CD4-positive, alpha-beta T cell (primary cell): ENCODE measurements at regions of chr11 and their contacts with region 1.

Region 1: DNA sequence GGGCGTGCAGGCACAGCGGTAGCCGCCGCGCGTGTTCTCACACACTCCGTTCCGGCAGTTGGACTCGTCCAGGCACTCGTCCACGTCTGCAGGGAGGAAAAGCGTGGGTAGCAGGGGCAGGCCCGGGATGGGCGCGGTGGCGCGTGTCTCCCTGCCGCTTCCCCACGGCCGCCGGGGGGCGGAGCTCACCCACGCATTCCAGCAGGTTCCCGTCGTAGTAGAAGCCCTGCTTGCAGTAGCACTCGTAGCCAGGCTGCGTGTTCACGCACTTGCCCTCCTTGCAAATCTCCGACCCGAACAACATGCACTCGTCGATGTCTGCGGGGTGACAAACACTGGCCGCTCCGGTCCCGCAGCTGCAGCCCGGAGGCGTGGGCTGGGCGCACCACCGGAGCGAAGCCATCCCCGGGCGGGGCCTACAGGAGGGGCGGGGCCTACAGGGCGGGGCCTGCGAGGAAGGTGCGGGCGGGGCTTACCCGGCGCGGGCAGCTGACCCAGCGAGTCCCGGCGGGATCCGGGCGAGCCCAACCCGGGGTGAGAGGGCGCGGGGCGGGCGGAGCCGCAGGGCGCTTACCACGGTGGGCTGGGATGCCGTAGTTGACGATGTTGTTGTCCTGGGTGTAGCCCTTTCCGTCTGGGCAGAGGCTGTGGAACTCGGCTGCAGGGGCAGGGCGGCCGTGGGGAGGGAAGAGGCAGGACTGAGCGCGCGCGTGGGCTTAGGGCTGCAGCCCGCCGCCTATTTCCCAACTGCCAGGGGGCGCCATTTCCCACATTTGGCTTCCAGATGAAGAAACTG is 15.6 kb downstream of the SCYL1 start:
- DNase-seq: peak; percentile 81 to 94 (median 85)
- ATAC-seq: peak; percentile 82
- H3K4me3 ChIP-seq: peak overlapping the region; percentile 80
- H3K4me3 Mint-ChIP-seq: peak overlapping the region; percentile 90
- H3K27ac ChIP-seq: peak overlapping the region; percentile 14 to 64
- H3K27ac Mint-ChIP-seq: peak overlapping the region; percentile 65
- H3K4me1 ChIP-seq: peaks cover 23% of the 10 kb centered on the region
- H3K4me1 Mint-ChIP-seq: peaks cover 25% of the 10 kb centered on the region
- H3K27me3 ChIP-seq: no peaks in the 10 kb centered on the region
- H3K27me3 Mint-ChIP-seq: no peaks in the 10 kb centered on the region
- CTCF ChIP-seq: peak; percentile 79

Region 2: GRCh38 chr11:64916040-64916774 is 624.3 kb before region 1 on chr11:
- CTCF ChIA-PET with region 1: no interaction called
- POLR2A ChIA-PET with region 1: no interaction called
- intact Hi-C with region 1: no loop called
- DNase-seq: peak in 12 of 14 experiments; percentile 12 to 82 (median 36)
- ATAC-seq: no peak
- H3K4me3 ChIP-seq: peak overlapping the region; percentile 89
- H3K4me3 Mint-ChIP-seq: peak overlapping the region; percentile 93
- H3K27ac ChIP-seq: peak overlapping the region; percentile 66 to 78
- H3K27ac Mint-ChIP-seq: peak overlapping the region; percentile 81
- H3K4me1 ChIP-seq: peaks cover 33% of the 10 kb centered on the region
- H3K4me1 Mint-ChIP-seq: peaks cover 26% of the 10 kb centered on the region
- H3K27me3 ChIP-seq: no peaks in the 10 kb centered on the region
- H3K27me3 Mint-ChIP-seq: no peaks in the 10 kb centered on the region
- CTCF ChIP-seq: no peak

Region 3: DNA sequence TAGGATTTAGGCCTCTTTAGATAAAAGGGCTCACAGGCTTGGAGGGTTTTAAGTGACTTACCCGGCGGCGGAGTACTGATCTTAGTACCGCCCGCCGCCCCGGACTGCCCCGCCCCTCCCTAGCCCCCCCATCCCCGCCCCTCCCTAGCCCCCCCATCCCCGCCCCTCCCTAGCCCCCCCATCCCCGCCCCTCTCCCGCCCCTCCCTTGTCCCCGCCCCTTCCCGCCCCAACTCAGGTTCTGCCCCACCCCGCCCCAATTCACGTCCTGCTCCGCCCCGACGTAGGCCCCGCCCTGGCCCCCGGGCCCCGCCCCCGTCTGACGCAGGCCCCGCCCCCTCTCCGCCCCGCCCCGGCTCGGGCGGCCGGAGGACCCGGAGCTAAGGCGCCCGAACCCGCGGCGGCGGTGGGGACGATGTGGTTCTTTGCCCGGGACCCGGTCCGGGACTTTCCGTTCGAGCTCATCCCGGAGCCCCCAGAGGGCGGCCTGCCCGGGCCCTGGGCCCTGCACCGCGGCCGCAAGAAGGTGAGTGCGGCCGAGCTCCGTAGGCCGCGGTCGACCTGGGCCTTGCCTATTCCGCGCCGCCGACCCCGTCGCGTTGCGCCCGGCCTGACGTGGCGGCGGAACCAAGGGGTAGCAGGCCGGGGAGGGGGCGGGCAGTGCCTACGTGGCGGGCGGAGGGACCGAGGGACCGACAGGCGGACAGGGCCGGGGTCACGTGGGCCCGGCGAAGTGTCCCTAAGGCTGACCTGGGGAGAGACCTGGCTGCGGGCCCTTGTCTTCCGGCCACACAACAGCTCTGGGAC is 15.6 kb before region 1 on chr11 and contains the start of gene SCYL1:
- CTCF ChIA-PET with region 1: interaction called, 12 read pairs
- POLR2A ChIA-PET with region 1: interaction called, 27 read pairs
- intact Hi-C with region 1: loop called in 1 of 2 experiments (anchors 1 kb)
- DNase-seq: peak; percentile 72 to 91 (median 81)
- ATAC-seq: peak; percentile 79
- H3K4me3 ChIP-seq: peak within 1 kb of the TSS; percentile 75
- H3K4me3 Mint-ChIP-seq: peak within 1 kb of the TSS; percentile 88
- H3K27ac ChIP-seq: peak within 1 kb of the TSS; percentile 60 to 84
- H3K27ac Mint-ChIP-seq: peak within 1 kb of the TSS; percentile 91
- H3K4me1 ChIP-seq: peaks cover 65% of the 10 kb centered on the region
- H3K4me1 Mint-ChIP-seq: peaks cover 58% of the 10 kb centered on the region
- H3K27me3 ChIP-seq: no peaks in the 10 kb centered on the region
- H3K27me3 Mint-ChIP-seq: no peaks in the 10 kb centered on the region
- CTCF ChIP-seq: no peak
- total RNA-seq, gene SCYL1: 57.4 to 60.7 TPM

Region 4: DNA sequence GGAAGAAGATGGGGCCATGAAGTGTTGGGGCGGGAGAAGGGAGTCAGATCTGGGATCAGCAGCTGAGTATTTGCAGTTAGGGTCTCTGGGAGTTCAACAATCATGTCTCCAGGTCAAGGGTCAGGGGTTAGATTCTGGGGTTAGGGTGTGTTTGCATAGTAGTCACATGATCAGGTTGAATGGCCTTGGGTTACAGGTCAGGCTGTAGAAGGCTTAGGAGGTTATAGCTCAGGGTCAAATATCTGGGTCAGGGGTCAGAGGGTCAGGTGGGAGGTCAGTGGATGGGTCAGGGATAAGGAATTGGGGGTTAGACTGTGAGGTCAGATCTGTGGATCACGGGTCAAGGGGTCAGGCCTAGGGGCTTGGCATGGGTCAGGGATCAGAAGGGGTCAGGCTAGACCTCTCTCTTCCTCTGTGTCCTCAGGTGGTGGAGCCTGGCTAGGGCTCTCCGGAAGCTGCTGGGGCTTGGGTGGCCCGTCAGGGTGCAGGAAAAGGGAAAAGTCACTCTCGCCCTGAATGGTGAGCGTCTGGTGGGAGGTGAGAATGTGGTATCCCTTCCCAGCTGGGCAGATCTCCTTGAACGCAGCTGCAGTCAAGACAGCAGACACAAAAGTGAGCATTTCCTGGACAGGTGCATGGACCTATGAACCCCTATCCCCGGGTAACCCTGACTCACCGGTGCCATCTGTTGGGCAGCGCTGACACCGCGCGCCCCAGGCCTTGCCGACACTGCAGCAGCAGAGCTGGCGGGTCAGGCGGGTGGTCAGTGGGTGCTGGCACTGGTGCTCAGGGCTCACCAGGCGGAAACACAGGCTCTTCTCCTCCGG is 11.3 kb after region 1 on chr11:
- CTCF ChIA-PET with region 1: interaction called, 35 read pairs
- POLR2A ChIA-PET with region 1: interaction called, 41 read pairs
- intact Hi-C with region 1: loop called (anchors 1 kb)
- DNase-seq: peak; percentile 49 to 83 (median 64)
- ATAC-seq: peak; percentile 37
- H3K4me3 ChIP-seq: no peak overlapping the region
- H3K4me3 Mint-ChIP-seq: peak overlapping the region; percentile 71
- H3K27ac ChIP-seq: no peak overlapping the region
- H3K27ac Mint-ChIP-seq: peak overlapping the region; percentile 82
- H3K4me1 ChIP-seq: peaks cover 88% of the 10 kb centered on the region
- H3K4me1 Mint-ChIP-seq: peaks cover 83% of the 10 kb centered on the region
- H3K27me3 ChIP-seq: no peaks in the 10 kb centered on the region
- H3K27me3 Mint-ChIP-seq: no peaks in the 10 kb centered on the region
- CTCF ChIP-seq: peak; percentile 78

Region 5: DNA sequence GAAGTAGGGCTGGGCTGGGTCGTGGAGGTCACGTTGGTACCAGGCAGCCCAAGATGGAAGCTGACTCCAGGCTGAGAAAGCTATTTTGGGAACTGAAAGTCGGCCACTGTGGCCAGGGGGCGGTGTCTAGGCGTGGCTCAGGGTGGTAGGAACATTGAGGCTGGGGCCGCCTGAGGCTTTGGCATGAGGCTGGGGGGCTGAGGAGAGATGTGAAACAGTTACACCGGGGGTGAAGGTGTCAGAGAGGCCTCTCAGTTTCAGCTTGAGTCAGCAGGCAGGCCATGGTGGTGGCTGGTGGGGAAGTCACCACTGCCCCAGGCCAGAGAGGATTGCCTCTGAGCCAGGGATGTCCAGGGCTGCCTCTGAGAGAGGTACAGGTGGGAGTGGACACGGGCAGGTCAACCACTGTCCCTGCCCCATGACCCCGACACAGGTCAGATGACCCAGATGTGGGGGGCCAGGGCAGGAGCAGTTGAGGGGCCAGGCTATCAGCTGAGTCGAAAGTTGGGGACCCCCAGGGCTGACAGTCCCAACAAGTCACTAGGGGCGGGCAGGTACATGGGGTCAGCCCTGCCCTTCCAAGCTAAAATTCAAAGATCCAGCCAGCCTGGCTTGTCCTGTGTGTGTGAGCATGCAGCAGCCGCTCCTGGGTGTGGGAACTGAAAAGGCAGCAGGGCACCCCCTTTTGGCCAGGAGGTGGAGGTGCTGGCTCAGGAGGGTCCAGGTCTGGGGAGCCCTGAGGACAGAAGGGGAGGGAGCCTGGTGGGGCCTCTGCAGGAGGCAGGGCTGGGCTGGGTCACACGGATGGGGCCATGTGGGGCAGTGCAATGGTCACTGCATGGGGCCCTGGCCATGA is 47.9 kb after region 1 on chr11:
- CTCF ChIA-PET with region 1: interaction called, 86 read pairs
- POLR2A ChIA-PET with region 1: interaction called, 23 read pairs
- intact Hi-C with region 1: loop called (anchors 1 kb)
- DNase-seq: peak; percentile 63 to 90 (median 74)
- ATAC-seq: peak; percentile 99
- H3K4me3 ChIP-seq: no peak overlapping the region
- H3K4me3 Mint-ChIP-seq: no peak overlapping the region
- H3K27ac ChIP-seq: peak overlapping the region; percentile 1 to 60
- H3K27ac Mint-ChIP-seq: peak overlapping the region; percentile 21
- H3K4me1 ChIP-seq: peaks cover 33% of the 10 kb centered on the region
- H3K4me1 Mint-ChIP-seq: peaks cover 17% of the 10 kb centered on the region
- H3K27me3 ChIP-seq: no peaks in the 10 kb centered on the region
- H3K27me3 Mint-ChIP-seq: no peaks in the 10 kb centered on the region
- CTCF ChIP-seq: peak; percentile 70

Region 6: DNA sequence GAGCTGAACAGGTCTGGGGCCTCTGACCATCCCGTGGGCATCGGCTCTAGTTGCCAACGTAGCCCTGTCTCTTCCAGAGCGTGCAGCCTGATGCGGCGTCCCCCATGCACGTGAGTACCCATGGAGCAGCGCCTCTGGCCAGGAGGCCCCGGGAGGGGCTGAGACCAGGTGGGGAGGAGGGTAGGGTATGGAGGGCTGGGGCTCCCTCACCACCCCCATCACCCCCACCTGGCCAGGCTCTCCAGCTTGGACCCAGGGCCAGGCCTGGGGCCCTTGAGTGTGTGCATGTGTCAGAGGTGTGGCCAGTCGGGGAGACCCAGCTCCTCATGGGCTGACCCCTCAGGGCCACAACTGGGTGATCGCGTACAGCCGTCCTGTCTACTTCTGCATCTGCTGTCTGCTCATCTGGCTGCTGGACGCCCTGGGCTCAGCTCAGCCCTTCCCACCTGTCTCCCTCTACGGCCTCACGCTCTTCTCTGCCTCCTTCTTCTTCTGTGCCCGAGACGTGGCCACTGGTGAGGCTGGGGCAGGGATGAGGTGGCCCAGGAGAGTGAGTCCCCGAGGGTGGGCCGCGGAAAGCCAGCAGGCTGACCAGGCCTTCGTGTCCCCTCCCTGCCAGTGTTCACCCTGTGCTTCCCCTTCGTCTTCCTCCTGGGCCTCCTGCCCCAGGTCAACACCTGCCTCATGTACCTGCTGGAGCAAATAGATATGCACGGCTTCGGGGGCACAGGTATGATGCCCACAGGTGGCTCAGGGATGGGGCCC is 83.5 kb after region 1 on chr11:
- CTCF ChIA-PET with region 1: no interaction called
- POLR2A ChIA-PET with region 1: no interaction called
- intact Hi-C with region 1: no loop called
- DNase-seq: no peak
- ATAC-seq: no peak
- H3K4me3 ChIP-seq: no peak overlapping the region
- H3K4me3 Mint-ChIP-seq: no peak overlapping the region
- H3K27ac ChIP-seq: no peak overlapping the region
- H3K27ac Mint-ChIP-seq: no peak overlapping the region
- H3K4me1 ChIP-seq: peaks cover 13% of the 10 kb centered on the region
- H3K4me1 Mint-ChIP-seq: peaks cover 14% of the 10 kb centered on the region
- H3K27me3 ChIP-seq: no peaks in the 10 kb centered on the region
- H3K27me3 Mint-ChIP-seq: no peaks in the 10 kb centered on the region
- CTCF ChIP-seq: no peak

Region 7: DNA sequence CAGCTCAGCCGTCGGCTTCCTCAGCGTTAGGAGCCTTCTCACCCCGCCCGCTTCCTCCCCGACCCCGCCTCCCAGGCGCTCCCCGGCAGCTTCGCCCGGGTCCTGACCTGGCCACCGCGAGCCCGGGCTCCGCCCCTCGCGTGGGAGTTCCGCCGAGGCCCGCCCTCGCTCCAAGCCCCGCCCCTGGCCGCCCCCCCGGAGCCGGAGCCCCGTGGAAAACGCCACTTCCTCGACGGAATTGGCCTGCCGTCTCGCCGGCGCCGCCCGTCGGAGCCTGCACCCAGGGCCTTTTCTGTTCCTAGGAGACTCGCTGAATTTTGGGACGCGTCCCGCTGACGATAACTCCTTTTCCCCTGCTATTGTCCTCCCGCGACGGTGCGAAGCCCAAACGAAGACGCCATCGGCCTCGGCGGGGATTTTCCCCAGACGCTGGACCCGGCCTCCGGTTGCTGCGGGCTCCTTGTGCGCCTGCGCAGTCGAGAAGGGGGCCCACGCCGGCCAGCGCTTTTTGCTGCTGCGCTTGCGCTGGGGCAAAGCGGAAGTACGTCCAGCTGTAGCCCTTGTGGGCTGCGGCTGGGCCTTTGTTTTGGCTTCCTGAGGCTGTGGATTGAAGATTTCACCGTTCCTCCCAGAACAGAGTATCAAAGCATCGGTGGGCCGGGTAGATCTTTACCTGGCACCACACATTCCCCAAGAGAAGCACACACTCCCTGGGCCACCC is 112.2 kb after region 1 on chr11:
- CTCF ChIA-PET with region 1: no interaction called
- POLR2A ChIA-PET with region 1: interaction called, 4 read pairs
- intact Hi-C with region 1: loop called in 1 of 2 experiments (anchors 5 kb)
- DNase-seq: peak; percentile 92 to 99 (median 96)
- ATAC-seq: peak; percentile 75
- H3K4me3 ChIP-seq: peak overlapping the region; percentile 66
- H3K4me3 Mint-ChIP-seq: peak overlapping the region; percentile 88
- H3K27ac ChIP-seq: peak overlapping the region; percentile 95 to 99
- H3K27ac Mint-ChIP-seq: peak overlapping the region; percentile 97
- H3K4me1 ChIP-seq: peaks cover 60% of the 10 kb centered on the region
- H3K4me1 Mint-ChIP-seq: peaks cover 54% of the 10 kb centered on the region
- H3K27me3 ChIP-seq: no peaks in the 10 kb centered on the region
- H3K27me3 Mint-ChIP-seq: no peaks in the 10 kb centered on the region
- CTCF ChIP-seq: no peak

Region 8: DNA sequence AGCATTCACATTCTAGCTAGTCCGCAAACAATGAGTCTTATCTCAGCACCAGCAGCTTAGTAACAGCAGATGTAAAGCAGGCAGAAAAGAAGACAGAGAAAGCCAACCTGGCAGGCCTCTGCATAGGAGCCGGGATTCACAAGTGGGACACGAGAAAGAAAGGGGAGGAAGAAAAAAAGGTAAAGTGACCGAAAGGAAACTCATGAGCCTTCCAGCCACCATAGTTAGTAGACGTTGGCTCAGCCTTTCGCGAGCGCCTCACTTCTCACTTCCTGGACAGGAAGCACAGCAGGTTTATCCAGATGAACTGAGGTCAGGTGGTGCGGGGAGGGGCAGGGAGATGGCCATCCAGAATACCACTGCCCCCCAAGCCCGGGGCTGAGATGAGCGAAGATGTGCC is 151.9 kb after region 1 on chr11:
- CTCF ChIA-PET with region 1: no interaction called
- POLR2A ChIA-PET with region 1: no interaction called
- intact Hi-C with region 1: no loop called
- DNase-seq: no peak
- ATAC-seq: no peak
- H3K4me3 ChIP-seq: no peak overlapping the region
- H3K4me3 Mint-ChIP-seq: no peak overlapping the region
- H3K27ac ChIP-seq: no peak overlapping the region
- H3K27ac Mint-ChIP-seq: no peak overlapping the region
- H3K4me1 ChIP-seq: no peaks in the 10 kb centered on the region
- H3K4me1 Mint-ChIP-seq: no peaks in the 10 kb centered on the region
- H3K27me3 ChIP-seq: no peaks in the 10 kb centered on the region
- H3K27me3 Mint-ChIP-seq: no peaks in the 10 kb centered on the region
- CTCF ChIP-seq: no peak